CD4-positive, alpha-beta T cell (primary cell): ENCODE measurements at regions of chr9 and their contacts with region 1.

Region 1: DNA sequence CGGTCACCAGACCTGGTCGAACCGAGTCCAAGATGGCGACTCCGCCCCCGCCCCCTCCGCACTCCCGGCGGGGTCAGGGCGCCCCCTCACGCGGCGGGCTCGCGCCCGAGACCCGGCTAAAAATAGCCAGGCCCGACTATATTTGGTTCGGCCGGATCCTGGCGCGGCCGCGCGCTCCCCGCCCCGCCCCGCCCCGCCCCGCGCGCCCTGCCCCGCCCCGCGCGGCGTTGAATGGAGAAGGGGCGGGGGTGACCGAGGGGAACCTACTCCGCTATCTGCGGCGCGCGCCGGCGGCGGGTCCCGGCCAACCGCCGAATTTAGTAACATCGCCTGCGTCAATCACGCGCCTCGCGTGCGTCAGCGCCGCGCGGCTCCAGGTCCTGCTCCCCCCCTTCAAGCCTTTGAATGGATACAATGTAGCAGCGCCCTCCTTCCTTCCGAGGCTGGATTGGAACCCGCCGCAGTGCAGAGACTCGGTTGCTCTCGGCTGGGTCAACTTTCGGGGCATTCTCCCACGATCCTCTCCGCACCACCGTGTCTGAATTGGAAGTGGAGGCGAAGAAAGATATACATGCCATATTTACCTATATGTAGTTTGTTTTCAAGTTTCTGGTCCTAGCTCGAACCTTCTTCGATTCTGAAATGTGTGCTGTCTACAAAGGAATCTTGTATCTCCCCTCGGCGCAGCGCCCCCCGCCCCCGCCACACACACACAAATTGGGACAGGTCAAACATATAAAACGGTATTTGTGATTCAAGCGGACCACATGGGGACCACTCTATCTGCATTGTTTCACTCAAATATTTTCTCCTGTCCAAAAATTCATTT is 1.6 kb upstream of the NR4A3 start:
- DNase-seq: peak; percentile 80 to 99 (median 88)
- ATAC-seq: peak; percentile 44
- H3K4me3 ChIP-seq: peak overlapping the region; percentile 82
- H3K4me3 Mint-ChIP-seq: peak overlapping the region; percentile 100
- H3K27ac ChIP-seq: peak overlapping the region; percentile 89 to 95
- H3K27ac Mint-ChIP-seq: peak overlapping the region; percentile 96
- H3K4me1 ChIP-seq: peaks cover 58% of the 10 kb centered on the region
- H3K4me1 Mint-ChIP-seq: peaks cover 58% of the 10 kb centered on the region
- H3K27me3 ChIP-seq: peaks cover 29 to 32% of the 10 kb centered on the region in 2 experiments
- H3K27me3 Mint-ChIP-seq: peaks cover 46% of the 10 kb centered on the region
- CTCF ChIP-seq: no peak

Region 2: DNA sequence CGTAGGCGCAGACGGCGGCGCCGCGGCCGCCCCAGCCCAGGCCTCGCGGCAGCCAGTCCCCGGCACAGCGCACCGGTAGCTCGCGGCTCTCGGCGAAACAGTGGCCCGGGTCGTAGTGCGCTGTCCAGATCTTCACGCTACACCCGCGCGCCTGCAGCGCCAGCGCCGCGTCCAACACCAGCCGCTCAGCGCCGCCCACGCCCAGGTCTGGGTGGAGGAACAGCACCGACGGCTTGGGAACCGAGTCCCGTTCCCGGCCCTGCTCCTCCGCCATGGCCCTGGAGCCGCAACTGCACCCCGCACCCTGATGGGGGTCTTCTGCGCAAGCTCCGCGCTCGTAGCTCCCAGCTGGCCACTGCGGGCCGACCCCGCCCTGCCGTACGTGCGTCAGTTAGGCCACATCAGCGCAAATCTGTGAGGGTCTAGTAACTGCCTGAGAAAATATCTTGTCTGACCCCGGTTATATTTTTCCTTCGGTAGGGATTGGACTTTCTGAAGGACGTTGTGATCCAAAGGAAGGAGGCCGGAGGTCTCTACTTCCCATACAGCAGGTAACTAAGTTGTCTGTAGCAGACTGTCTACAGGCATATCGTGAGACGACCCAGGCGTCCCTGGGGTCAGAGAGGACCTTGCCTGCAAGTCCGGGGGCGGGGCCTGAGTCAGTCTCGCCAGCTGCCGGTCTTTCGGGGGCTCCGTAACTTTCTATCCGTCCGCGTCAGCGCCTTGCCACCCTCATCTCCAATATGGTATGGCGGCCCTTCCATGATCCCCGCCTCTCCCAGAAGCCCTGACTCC is 598.3 kb before region 1 on chr9 and contains the starts of genes ALG2 and SEC61B:
- CTCF ChIA-PET with region 1: no interaction called
- POLR2A ChIA-PET with region 1: interaction called, 6 read pairs
- intact Hi-C with region 1: loop called in 1 of 2 experiments (anchors 5 kb)
- DNase-seq: peak; percentile 87 to 96 (median 90)
- ATAC-seq: peak; percentile 84
- H3K4me3 ChIP-seq: peak within 1 kb of the TSS; percentile 91
- H3K4me3 Mint-ChIP-seq: peak within 1 kb of the TSS; percentile 98
- H3K27ac ChIP-seq: peak within 1 kb of the TSS; percentile 89 to 95
- H3K27ac Mint-ChIP-seq: peak within 1 kb of the TSS; percentile 99
- H3K4me1 ChIP-seq: peaks cover 33% of the 10 kb centered on the region
- H3K4me1 Mint-ChIP-seq: peaks cover 81% of the 10 kb centered on the region
- H3K27me3 ChIP-seq: no peaks in the 10 kb centered on the region
- H3K27me3 Mint-ChIP-seq: no peaks in the 10 kb centered on the region
- CTCF ChIP-seq: no peak
- total RNA-seq, gene ALG2: 18.1 to 19.9 TPM
- total RNA-seq, gene SEC61B: 83.4 to 84.2 TPM

Region 3: GRCh38 chr9:99889121-99889520 is 69.1 kb after region 1 on chr9:
- CTCF ChIA-PET with region 1: no interaction called
- POLR2A ChIA-PET with region 1: no interaction called
- intact Hi-C with region 1: no loop called
- DNase-seq: peak in 2 of 14 experiments; percentile 7 to 31
- ATAC-seq: no peak
- H3K4me3 ChIP-seq: no peak overlapping the region
- H3K4me3 Mint-ChIP-seq: no peak overlapping the region
- H3K27ac ChIP-seq: no peak overlapping the region
- H3K27ac Mint-ChIP-seq: no peak overlapping the region
- H3K4me1 ChIP-seq: no peaks in the 10 kb centered on the region
- H3K4me1 Mint-ChIP-seq: no peaks in the 10 kb centered on the region
- H3K27me3 ChIP-seq: no peaks in the 10 kb centered on the region
- H3K27me3 Mint-ChIP-seq: no peaks in the 10 kb centered on the region
- CTCF ChIP-seq: no peak

Region 4: GRCh38 chr9:99906403-99907207 is 86.5 kb after region 1 on chr9 and contains the start of gene STX17:
- CTCF ChIA-PET with region 1: interaction called, 6 read pairs
- POLR2A ChIA-PET with region 1: interaction called, 49 read pairs
- intact Hi-C with region 1: loop called (anchors 1 to 2 kb)
- DNase-seq: peak; percentile 69 to 92 (median 79)
- ATAC-seq: peak; percentile 89
- H3K4me3 ChIP-seq: peak within 1 kb of the TSS; percentile 91
- H3K4me3 Mint-ChIP-seq: peak within 1 kb of the TSS; percentile 100
- H3K27ac ChIP-seq: peak within 1 kb of the TSS; percentile 98
- H3K27ac Mint-ChIP-seq: peak within 1 kb of the TSS; percentile 100
- H3K4me1 ChIP-seq: peaks cover 11% of the 10 kb centered on the region
- H3K4me1 Mint-ChIP-seq: peaks cover 46% of the 10 kb centered on the region
- H3K27me3 ChIP-seq: no peaks in the 10 kb centered on the region
- H3K27me3 Mint-ChIP-seq: no peaks in the 10 kb centered on the region
- CTCF ChIP-seq: no peak
- total RNA-seq, gene STX17: 29.3 to 31.3 TPM

Region 5: DNA sequence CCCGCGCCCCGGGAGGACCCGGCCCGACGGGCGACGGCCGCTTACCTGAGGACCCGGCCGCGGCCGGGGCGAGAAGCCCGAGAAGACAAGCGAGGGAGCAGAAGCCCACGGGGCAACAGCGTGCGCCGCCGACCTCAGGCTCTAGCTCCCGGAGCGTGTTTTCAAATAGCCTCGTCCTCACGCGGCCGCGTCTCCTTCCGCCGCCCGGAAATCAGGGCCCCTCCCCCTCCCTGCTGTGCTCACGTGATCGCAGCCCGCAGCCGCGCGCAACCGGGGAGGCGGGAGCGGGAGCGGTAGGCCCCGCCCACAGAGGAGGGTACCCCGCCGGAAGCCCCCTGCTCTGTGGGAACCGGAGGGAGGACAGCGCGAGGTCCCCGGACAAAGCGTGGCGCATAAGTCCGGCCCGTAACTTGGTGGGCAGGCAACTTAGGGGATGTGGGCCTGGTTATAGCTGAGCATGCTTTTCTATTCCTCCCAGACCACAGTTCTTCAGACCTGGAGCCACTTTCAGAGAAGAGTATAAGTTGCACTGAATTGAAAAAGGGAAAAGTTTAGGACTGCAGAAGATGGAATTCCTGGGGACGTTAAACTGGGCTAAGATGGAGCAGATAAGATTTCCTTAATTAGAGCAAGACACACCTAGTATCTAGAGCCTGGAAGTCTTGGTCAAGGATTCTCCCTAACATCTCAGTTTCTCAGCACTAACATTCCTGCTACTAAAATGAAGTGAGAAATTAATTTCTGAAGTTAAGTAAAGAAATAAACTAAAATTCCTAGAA is 532.8 kb after region 1 on chr9 and contains the start of gene TEX10:
- CTCF ChIA-PET with region 1: no interaction called
- POLR2A ChIA-PET with region 1: interaction called, 8 read pairs
- intact Hi-C with region 1: loop called in 1 of 2 experiments (anchors 10 kb)
- DNase-seq: peak; percentile 79 to 93 (median 85)
- ATAC-seq: peak; percentile 90
- H3K4me3 ChIP-seq: peak within 1 kb of the TSS; percentile 85
- H3K4me3 Mint-ChIP-seq: peak within 1 kb of the TSS; percentile 89
- H3K27ac ChIP-seq: peak within 1 kb of the TSS; percentile 58 to 60
- H3K27ac Mint-ChIP-seq: peak within 1 kb of the TSS; percentile 60
- H3K4me1 ChIP-seq: peaks cover 21% of the 10 kb centered on the region
- H3K4me1 Mint-ChIP-seq: peaks cover 53% of the 10 kb centered on the region
- H3K27me3 ChIP-seq: no peaks in the 10 kb centered on the region
- H3K27me3 Mint-ChIP-seq: no peaks in the 10 kb centered on the region
- CTCF ChIP-seq: no peak
- total RNA-seq, gene TEX10: 9.3 to 10.1 TPM

Region 6: DNA sequence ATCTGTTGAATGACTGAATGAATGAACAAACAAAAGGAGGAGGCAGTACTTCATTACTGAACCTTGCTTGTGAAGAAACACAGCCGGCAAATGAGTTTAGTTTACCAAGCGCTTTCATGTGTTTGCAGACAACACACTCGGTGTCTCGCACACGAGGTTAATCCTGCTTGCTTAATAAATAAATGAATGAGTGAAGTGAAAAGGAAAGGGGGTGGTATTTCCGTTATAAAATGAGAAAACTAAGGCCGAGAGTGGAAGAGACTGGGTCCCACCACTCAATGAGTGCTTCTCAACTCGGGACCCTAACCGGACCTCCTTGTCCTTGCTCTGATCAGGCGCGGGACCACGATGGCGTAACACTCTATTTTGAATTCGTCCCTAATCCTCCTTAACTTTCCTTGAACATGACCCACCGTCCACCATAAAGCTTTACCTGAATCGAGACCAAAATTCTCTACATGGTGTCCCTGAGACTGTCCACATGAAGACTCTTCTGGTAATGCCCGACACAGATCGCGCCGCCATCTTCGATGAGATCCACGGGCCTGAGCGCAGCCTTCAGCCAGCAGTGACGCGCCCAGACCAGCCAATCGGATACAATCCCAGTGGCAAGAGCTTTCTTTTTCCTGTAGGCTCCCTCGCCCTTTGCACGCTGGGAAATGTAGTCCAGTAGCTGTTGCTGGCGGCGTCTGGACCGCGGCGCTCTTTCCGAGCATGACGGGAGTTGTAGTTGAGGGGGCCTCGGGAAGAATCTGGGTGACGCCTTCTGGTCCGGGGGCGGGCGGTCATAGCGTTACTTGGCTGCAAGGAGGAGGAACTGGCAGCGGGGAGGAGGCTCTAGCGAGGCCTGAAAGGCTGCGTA is 1578.2 kb after region 1 on chr9 and contains the starts of genes MRPL50 and ZNF189:
- CTCF ChIA-PET with region 1: no interaction called
- POLR2A ChIA-PET with region 1: no interaction called
- intact Hi-C with region 1: loop called in 1 of 2 experiments (anchors 10 kb)
- DNase-seq: peak; percentile 90 to 99 (median 94)
- ATAC-seq: peak; percentile 94
- H3K4me3 ChIP-seq: peak within 1 kb of the TSS; percentile 81
- H3K4me3 Mint-ChIP-seq: peak within 1 kb of the TSS; percentile 99
- H3K27ac ChIP-seq: peak within 1 kb of the TSS; percentile 87 to 92
- H3K27ac Mint-ChIP-seq: peak within 1 kb of the TSS; percentile 99
- H3K4me1 ChIP-seq: peaks cover 32% of the 10 kb centered on the region
- H3K4me1 Mint-ChIP-seq: peaks cover 86% of the 10 kb centered on the region
- H3K27me3 ChIP-seq: no peaks in the 10 kb centered on the region
- H3K27me3 Mint-ChIP-seq: no peaks in the 10 kb centered on the region
- CTCF ChIP-seq: no peak
- total RNA-seq, gene MRPL50: 5.9 to 6.1 TPM
- total RNA-seq, gene ZNF189: 5.0 to 5.3 TPM